AG04450 (cell line): ENCODE measurements at regions of chr4 and their contacts with region 1.

Region 1: GRCh38 chr4:26362745-26363439 is 42.1 kb downstream of the RBPJ start:
- DNase-seq: no peak
- H3K4me3 ChIP-seq: no peak overlapping the region
- H3K27ac ChIP-seq: no peak overlapping the region
- H3K27me3 ChIP-seq: no peaks in the 10 kb centered on the region
- CTCF ChIP-seq: no peak

Region 2: DNA sequence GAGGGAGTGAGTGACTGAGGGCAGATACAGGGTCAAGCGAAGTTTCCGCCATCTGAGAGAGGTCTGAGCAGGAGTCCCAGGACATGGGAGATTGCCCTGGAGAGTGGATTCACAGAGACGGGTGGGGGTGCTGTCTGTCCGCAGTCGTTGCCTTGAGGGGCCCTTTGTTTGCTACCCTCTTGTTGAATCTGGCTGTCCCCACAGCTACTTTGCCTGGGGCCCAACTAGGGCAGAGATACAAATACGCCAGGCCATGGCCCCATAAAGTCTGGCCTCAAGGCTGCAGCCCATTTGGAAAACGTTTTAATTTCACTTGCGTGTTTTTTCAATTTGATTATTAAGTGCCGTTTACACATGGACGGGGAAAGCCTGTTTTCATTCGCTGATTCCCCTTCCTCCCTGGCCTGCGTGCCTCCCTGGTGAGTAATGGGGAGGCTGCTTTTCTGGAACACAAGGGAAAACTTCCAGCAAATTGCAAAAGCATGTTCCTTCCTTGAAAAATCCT is 314.5 kb before region 1 on chr4:
- CTCF ChIA-PET with region 1: interaction called, 10 read pairs
- POLR2A ChIA-PET with region 1: no interaction called
- DNase-seq: peak; percentile 74
- H3K4me3 ChIP-seq: no peak overlapping the region
- H3K27ac ChIP-seq: peak overlapping the region; percentile 97
- H3K27me3 ChIP-seq: no peaks in the 10 kb centered on the region
- CTCF ChIP-seq: no peak

Region 3: DNA sequence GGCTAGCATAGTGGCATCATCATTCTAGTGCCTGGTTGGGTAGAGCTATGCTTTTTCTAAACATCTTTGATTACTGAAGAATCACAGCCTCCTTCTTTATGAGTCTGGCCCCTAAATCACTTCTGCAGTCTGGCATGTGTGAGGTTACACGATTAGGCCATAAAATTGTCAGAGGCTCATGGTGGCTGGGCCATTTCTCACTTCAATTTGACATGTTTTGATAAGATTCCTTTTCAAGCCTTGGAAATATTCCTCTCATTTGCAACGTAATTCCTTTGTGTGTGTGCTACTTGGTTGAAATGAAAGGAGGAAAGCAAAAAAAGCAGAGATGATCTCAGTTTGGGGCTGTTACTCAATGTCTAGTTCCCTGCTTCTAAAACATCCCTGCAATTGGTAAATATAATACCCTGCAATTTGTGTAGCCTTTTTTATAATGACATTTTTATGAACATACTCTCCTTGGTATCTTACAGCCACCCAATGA is 121.2 kb after region 1 on chr4:
- CTCF ChIA-PET with region 1: no interaction called
- POLR2A ChIA-PET with region 1: no interaction called
- DNase-seq: no peak
- H3K4me3 ChIP-seq: no peak overlapping the region
- H3K27ac ChIP-seq: no peak overlapping the region
- H3K27me3 ChIP-seq: peaks cover 12% of the 10 kb centered on the region
- CTCF ChIP-seq: no peak